SK-N-SH (cell line): ENCODE measurements at regions of chr10 and their contacts with region 1.

Region 1: DNA sequence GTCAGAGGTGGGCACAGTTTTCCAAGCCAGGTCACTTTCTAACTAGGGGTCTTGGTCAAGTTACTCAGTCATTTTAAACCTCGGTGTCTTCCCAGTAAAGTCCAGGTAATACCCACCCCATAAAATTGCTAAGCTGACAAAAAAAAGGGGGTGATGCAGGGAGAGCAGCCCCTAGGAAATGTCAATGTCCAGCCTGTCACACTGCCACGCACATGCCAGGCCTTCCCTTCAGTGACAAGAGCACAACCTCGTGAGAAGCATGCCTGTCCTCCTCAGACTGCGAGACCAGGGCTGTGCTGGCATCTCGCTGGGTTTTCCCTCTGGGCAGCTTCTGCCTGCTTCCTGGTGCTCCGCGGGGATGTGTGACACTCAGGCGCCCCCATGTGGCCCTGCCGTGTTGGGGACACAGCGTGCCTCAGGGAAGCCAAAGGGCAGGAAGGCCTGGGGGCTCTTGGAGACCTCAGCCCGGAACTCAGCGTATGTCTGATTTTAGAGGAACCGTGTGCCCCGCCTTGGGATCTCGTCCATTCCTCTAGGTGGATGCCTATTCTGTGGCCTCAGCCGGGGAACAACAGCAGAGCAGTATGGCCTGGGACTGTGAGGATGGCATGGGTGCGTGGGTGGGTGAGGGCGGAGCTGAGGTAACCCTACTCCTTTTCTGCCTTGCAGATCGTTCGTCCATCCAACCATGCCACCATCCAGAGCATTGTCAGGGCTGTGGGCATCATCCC is 10.2 kb upstream of the GDF2 start:
- DNase-seq: peak; percentile 90
- H3K4me3 ChIP-seq: peak overlapping the region in 1 of 2 experiments; percentile 46; a peak in 1 of 4 replicates
- H3K27ac ChIP-seq: peak overlapping the region in 1 of 2 experiments; percentile 36; a peak in 2 of 4 replicates
- H3K4me1 ChIP-seq: peaks cover 0 to 51% of the 10 kb centered on the region in 2 experiments; a peak in 1 of 4 replicates
- H3K27me3 ChIP-seq: no peaks in the 10 kb centered on the region
- CTCF ChIP-seq: peak; percentile 80
- EP300 ChIP-seq: no peak
- RAD21 ChIP-seq: peak; percentile 97

Region 2: DNA sequence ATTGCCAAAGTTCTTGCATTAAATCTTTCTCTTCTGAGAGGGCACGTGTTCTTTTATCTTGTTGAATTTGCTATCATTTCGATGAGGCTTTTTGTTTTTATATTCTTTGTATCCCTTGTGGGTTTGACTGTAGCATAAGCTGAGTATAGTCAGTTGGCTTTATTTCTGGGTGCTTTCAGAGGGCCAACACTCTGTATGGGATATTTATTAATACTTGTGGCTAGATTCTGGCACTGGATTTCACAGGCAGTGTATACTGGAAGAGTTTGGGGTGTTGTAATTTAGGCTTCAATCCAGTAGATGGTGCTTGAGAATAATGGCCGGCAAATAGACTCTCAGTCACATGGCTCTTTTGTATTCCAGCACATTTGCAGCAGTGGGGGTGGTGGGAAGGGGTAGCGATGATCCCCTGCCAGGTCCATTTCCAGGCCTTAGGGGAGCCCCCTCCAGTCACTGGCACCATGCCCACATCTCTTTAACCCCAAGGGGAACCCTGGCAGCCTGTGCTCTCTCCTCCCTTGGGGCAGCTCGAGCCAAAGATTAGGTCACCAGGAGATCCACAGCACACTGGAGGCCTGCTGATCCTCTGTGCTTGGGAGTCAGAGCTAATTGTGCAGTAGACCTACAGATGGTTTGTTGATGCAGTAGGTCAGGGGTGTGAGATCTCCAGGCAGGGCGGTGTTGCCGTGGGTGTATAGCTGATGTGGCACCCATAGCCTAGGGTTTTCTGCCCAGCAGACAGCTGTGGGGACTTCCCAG is 319.1 kb before region 1 on chr10:
- CTCF ChIA-PET with region 1: interaction called, 77 read pairs
- POLR2A ChIA-PET with region 1: no interaction called
- DNase-seq: peak; percentile 52
- H3K4me3 ChIP-seq: no peak overlapping the region
- H3K27ac ChIP-seq: no peak overlapping the region
- H3K4me1 ChIP-seq: no peaks in the 10 kb centered on the region; a peak in 1 of 4 replicates
- H3K27me3 ChIP-seq: no peaks in the 10 kb centered on the region
- CTCF ChIP-seq: peak; percentile 58
- EP300 ChIP-seq: no peak
- RAD21 ChIP-seq: peak; percentile 78

Region 3: DNA sequence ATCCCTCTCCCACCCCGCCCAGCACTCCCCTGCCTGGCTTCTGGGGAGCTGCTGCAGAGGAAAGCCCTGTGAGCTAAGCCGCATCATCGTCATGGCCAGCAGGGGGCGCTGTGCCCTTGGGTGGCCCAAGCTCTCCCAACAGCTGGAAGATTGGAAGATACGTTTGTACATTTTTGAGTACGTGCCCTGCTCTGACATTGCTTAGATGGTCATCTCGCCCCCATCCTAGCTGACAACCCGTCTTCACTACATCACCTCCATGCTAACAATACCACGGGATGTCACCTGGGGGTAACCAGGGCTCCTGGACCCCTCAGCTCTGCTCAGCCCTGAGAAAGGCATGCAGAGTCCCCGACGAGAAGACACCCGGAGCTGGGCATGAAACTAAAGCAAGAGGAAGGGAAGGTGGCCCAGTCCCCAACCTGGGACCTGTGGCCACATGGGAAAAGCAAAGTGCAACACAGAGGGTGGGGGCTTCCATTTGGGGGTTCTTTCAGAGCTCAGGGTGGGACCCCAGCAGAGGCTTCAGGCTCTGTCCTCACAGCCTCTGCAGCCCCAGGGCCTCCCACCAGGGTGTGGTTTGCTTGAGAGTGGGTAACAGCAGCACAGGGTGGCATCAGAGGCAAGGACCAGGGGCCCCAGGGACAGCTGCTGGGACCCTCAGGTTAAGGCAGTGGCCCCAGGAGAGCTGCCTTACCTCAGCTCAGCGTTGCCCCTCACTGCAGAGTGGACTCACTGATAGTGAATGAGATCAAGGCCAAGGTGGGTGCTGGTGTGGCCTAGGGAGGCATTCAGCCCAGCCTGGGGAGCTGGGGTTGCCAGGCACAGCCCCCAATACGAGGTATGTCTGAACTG is 264.2 kb before region 1 on chr10:
- CTCF ChIA-PET with region 1: interaction called, 68 read pairs
- POLR2A ChIA-PET with region 1: no interaction called
- DNase-seq: peak; percentile 69
- H3K4me3 ChIP-seq: no peak overlapping the region; a peak in 1 of 4 replicates
- H3K27ac ChIP-seq: peak overlapping the region in 1 of 2 experiments; percentile 43; a peak in 1 of 4 replicates
- H3K4me1 ChIP-seq: peaks cover 0 to 61% of the 10 kb centered on the region in 2 experiments; a peak in 1 of 4 replicates
- H3K27me3 ChIP-seq: no peaks in the 10 kb centered on the region; the same call in 1 of the 2 replicates
- CTCF ChIP-seq: peak; percentile 71
- EP300 ChIP-seq: no peak
- RAD21 ChIP-seq: peak; percentile 74

Region 4: GRCh38 chr10:47261121-47261520 is 51.0 kb before region 1 on chr10:
- CTCF ChIA-PET with region 1: interaction called, 14 read pairs
- POLR2A ChIA-PET with region 1: no interaction called
- DNase-seq: no peak
- H3K4me3 ChIP-seq: no peak overlapping the region
- H3K27ac ChIP-seq: peak overlapping the region in 1 of 2 experiments; percentile 50; a peak in 2 of 4 replicates
- H3K4me1 ChIP-seq: peaks cover 0 to 10% of the 10 kb centered on the region in 2 experiments; a peak in 1 of 4 replicates
- H3K27me3 ChIP-seq: no peaks in the 10 kb centered on the region
- CTCF ChIP-seq: no peak
- EP300 ChIP-seq: no peak
- RAD21 ChIP-seq: no peak

Region 5: GRCh38 chr10:47300429-47300931 is 11.6 kb before region 1 on chr10:
- CTCF ChIA-PET with region 1: interaction called, 50 read pairs
- POLR2A ChIA-PET with region 1: interaction called, 3 read pairs
- DNase-seq: peak; percentile 73
- H3K4me3 ChIP-seq: peak overlapping the region in 1 of 2 experiments; percentile 49; a peak in 2 of 4 replicates
- H3K27ac ChIP-seq: peak overlapping the region in 1 of 2 experiments; percentile 71; a peak in 1 of 4 replicates
- H3K4me1 ChIP-seq: peaks cover 0 to 58% of the 10 kb centered on the region in 2 experiments; a peak in 1 of 4 replicates
- H3K27me3 ChIP-seq: peaks cover 43% of the 10 kb centered on the region
- CTCF ChIP-seq: no peak
- EP300 ChIP-seq: no peak
- RAD21 ChIP-seq: no peak